ENCODE measurements at regions of chr1 and their contacts with region 1.

Region 1: GRCh38 chr1:169711469-169712281 is at the start of gene SELL:
- DNase-seq: peak; percentile 83
- H3K4me3 ChIP-seq: peak within 1 kb of the TSS; percentile 56
- H3K27ac ChIP-seq: peak within 1 kb of the TSS; percentile 24
- H3K4me1 ChIP-seq: peaks cover 11% of the 10 kb centered on the region
- CTCF ChIP-seq: peak; percentile 97
- total RNA-seq, gene SELL: 0.16 and 0.46 TPM in 2 replicates

Region 2: GRCh38 chr1:169485544-169486278 is 226.0 kb before region 1 on chr1 and contains the start of gene SLC19A2:
- CTCF ChIA-PET with region 1: no interaction called
- POLR2A ChIA-PET with region 1: no interaction called
- intact Hi-C with region 1: loop called (anchors 5 kb)
- DNase-seq: peak; percentile 96
- H3K4me3 ChIP-seq: peak within 1 kb of the TSS; percentile 76
- H3K27ac ChIP-seq: no peak within 1 kb of the TSS
- H3K4me1 ChIP-seq: peaks cover 10% of the 10 kb centered on the region
- CTCF ChIP-seq: peak; percentile 24
- total RNA-seq, gene SLC19A2: 3.2 TPM in 2 replicates

Region 3: DNA sequence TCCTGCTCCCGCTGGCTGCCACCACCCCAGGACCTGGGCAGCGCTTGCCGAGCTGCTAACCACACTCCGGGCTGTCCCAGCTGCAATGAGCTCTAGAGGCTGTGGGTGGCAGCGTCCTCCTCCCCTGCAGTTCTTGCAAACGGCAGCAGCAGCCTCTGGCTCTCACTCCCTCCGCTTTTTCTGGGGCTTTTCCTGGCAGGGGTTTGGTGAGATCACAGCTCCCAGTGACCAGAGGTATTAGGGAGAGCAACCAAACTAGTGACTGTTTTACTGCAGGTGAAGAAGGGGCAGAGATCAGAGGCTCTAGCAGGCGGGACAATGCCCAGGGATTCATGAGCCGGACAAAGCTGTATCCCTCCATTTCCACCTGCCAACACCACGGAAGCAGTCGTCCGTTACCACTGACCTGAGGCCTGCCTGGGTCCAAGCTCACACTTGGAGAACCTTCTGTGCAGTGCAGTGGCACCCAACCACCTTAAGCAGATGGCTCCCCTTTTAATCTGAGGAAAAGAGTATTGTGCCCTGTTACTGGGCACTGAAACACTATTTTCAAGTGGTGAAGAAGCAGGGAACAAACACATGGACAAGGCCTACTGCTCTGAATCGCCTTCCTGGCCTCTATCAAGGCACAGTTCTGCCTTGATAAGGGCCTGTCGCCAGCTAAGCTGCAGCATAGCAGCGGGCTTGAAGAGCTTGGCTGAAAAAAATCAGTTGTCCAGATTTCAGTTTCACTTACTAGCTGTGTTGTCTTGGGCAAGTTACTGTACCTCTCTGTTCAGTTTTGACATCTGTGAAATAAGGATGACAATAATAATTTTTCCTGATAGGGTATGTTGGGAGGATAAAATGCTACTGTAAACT is 125.0 kb before region 1 on chr1 and contains the start of gene F5:
- CTCF ChIA-PET with region 1: interaction called, 3 read pairs
- POLR2A ChIA-PET with region 1: no interaction called
- intact Hi-C with region 1: loop called (anchors 5 kb)
- DNase-seq: peak; percentile 44
- H3K4me3 ChIP-seq: no peak within 1 kb of the TSS
- H3K27ac ChIP-seq: no peak within 1 kb of the TSS
- H3K4me1 ChIP-seq: no peaks in the 10 kb centered on the region
- CTCF ChIP-seq: peak; percentile 65
- total RNA-seq, gene F5: not detected in 2 replicates

Region 4: GRCh38 chr1:169680377-169681019 is 31.2 kb before region 1 on chr1:
- CTCF ChIA-PET with region 1: interaction called, 3 read pairs
- POLR2A ChIA-PET with region 1: interaction called, 10 read pairs
- intact Hi-C with region 1: no loop called
- DNase-seq: peak; percentile 67
- H3K4me3 ChIP-seq: peak overlapping the region; percentile 45
- H3K27ac ChIP-seq: peak overlapping the region; percentile 75
- H3K4me1 ChIP-seq: peaks cover 68% of the 10 kb centered on the region
- CTCF ChIP-seq: no peak

Region 5: DNA sequence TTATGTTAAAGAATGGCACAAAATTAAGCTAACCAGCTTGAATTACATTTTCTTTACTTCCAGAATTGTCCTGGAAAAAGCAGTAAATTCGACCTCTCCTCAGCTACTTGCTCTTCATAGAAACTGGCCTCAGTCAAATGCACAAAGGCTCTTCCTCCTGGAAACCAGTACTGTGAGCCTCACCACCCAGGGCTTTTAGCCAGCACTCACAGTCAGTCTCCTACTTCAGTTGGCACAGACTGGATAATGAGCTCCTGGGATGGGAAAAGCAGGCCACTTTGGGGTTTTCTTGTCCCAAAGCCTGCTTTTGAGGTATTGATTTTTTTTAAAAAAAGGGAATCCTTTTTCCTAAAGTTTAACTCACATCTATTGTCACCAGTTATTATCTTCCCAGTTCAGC is 141.7 kb after region 1 on chr1:
- CTCF ChIA-PET with region 1: no interaction called
- POLR2A ChIA-PET with region 1: no interaction called
- intact Hi-C with region 1: no loop called
- DNase-seq: no peak
- H3K4me3 ChIP-seq: no peak overlapping the region
- H3K27ac ChIP-seq: no peak overlapping the region
- H3K4me1 ChIP-seq: no peaks in the 10 kb centered on the region
- CTCF ChIP-seq: no peak

Measured in OCI-LY7 (cell line).